ENCODE measurements at regions of chr5 and their contacts with region 1.

Region 1: GRCh38 chr5:134411546-134412266 is at the start of gene CDKN2AIPNL:
- DNase-seq: peak; percentile 99
- H3K4me3 ChIP-seq: peak within 1 kb of the TSS; percentile 70 to 98 (median 81)
- H3K27ac ChIP-seq: peak within 1 kb of the TSS; percentile 82 to 91 (median 86)
- H3K4me1 ChIP-seq: peaks cover 8 to 44% (median 37%) of the 10 kb centered on the region in 6 donors
- H3K27me3 ChIP-seq: no peaks in the 10 kb centered on the region
- CTCF ChIP-seq: peak; percentile 73 to 94 (median 86)
- POLR2A ChIP-seq: peak in 2 of 3 donors; percentile 11 to 39
- total RNA-seq, gene CDKN2AIPNL: 13.1 to 16.5 (median 14.2) TPM

Region 2: DNA sequence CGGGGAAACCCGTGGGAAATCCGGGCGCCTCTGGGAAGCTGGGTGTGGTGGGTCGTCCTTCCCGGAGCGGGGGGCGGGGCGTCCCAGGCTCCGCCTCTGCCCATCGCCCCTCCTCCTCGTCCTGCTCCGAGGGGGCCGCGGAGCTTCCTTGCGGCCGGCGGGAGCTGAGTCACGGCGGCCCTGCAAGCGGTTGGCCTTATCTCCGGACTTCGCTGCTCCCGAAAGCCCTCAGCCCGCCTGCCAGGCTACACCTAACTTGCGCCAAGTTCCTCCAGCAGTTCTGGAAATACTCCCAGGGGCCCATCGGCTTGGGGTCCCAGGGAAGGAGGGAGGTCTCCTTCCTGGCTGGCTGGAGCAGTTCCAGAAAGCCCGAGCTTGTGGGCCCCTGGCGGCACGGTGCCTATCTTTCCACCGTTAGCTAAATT is 54.1 kb after region 1 on chr5:
- intact Hi-C with region 1: loop called (anchors 10 kb)
- DNase-seq: peak; percentile 94
- H3K4me3 ChIP-seq: peak overlapping the region; percentile 40 to 75 (median 50)
- H3K27ac ChIP-seq: peak overlapping the region; percentile 90 to 98 (median 96)
- H3K4me1 ChIP-seq: peaks cover 4 to 46% (median 40%) of the 10 kb centered on the region in 6 donors
- H3K27me3 ChIP-seq: no peaks in the 10 kb centered on the region
- CTCF ChIP-seq: peak in 3 of 11 experiments; percentile 8 to 14 (median 13)
- POLR2A ChIP-seq: peak in 2 of 3 donors; percentile 35 to 77

Region 3: DNA sequence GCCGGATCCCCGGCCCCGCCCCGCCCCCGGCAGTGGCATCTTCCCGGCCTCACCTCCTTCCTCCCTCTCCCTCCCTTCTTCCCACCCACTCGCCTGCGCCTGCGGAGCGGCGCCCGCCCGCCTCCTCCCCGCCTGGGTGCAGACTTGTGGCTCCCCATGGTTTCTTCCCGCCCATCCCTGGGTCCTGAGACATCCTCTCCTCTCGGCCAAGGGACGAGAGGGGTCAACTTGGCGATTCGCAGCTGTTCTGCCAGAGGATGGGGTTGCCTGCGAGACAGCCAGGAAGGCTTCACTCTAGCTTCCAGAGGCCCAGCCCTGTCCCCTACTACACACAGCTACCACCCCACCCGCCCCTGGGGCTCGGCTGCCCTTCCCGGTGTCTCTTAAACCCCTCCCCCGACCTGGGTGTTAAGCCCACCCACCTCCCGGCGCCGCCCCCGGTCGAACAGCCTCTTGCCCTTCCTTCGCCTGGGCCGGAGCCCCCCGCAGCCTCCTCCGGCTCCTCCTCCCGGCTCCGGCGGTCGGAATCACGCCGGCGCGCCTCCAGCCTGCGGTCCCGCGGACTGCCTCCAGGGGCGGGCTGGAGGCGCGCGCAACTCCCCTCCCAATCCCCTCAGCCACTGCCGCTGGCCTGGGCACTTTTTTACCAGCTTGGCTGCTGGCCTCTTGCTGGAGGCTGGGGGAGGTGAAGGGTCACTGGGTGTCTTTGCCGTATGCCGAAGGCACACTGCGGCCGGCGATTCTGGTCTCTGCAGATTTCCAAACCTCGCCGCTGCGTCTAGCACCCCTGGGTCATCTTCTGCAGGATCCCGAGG is 115.6 kb after region 1 on chr5:
- intact Hi-C with region 1: loop called (anchors 2 kb)
- DNase-seq: peak; percentile 96
- H3K4me3 ChIP-seq: peak overlapping the region; percentile 75 to 100 (median 100)
- H3K27ac ChIP-seq: peak overlapping the region; percentile 96 to 100 (median 98)
- H3K4me1 ChIP-seq: peaks cover 27 to 77% (median 57%) of the 10 kb centered on the region in 6 donors
- H3K27me3 ChIP-seq: no peaks in the 10 kb centered on the region
- CTCF ChIP-seq: peak; percentile 78 to 96 (median 93)
- POLR2A ChIP-seq: no peak

Region 4: DNA sequence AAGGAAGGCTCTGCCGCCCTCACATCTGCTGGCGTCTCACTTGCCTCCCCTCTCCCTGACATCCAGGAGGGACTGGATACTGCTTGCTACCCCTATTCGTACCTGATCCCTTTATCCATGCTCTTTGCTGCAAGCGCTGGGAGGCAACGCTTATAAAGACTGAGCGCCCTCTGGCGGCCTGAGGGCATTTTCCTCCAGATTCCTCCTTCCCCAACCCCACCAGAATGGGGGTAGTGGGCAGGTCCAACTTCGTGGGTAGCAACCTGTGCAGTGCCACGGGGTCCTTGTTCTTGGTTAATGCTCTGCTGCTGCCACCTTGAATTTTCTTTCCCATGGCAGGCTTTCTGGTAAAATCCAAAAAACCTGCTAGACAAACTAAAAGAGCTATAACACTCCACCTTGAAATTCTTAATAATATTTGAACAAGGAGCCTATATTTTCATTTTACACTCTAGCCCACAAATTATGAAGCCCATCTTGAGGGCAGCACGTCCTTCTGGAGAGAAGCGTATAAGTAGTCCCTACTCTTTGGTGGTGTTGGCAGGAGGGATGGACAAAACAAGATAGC is 166.2 kb after region 1 on chr5:
- intact Hi-C with region 1: loop called (anchors 10 kb)
- DNase-seq: peak; percentile 93
- H3K4me3 ChIP-seq: no peak overlapping the region
- H3K27ac ChIP-seq: peak overlapping the region in 2 of 8 donors; percentile 21 to 47
- H3K4me1 ChIP-seq: peaks cover 12 to 60% (median 22%) of the 10 kb centered on the region in 6 donors
- H3K27me3 ChIP-seq: no peaks in the 10 kb centered on the region
- CTCF ChIP-seq: peak; percentile 45 to 90 (median 82)
- POLR2A ChIP-seq: no peak

Measured in spleen (tissue), 13 donors.